ENCODE measurements at regions of chr7 and their contacts with region 1.

Region 1: GRCh38 chr7:44622307-44623151 is 16.1 kb downstream of the OGDH start:
- DNase-seq: peak; percentile 78
- ATAC-seq: peak; percentile 93
- H3K4me3 Mint-ChIP-seq: peak overlapping the region; percentile 66
- H3K27ac Mint-ChIP-seq: peak overlapping the region; percentile 99
- H3K4me1 Mint-ChIP-seq: peaks cover 91% of the 10 kb centered on the region
- H3K27me3 Mint-ChIP-seq: no peaks in the 10 kb centered on the region

Region 2: DNA sequence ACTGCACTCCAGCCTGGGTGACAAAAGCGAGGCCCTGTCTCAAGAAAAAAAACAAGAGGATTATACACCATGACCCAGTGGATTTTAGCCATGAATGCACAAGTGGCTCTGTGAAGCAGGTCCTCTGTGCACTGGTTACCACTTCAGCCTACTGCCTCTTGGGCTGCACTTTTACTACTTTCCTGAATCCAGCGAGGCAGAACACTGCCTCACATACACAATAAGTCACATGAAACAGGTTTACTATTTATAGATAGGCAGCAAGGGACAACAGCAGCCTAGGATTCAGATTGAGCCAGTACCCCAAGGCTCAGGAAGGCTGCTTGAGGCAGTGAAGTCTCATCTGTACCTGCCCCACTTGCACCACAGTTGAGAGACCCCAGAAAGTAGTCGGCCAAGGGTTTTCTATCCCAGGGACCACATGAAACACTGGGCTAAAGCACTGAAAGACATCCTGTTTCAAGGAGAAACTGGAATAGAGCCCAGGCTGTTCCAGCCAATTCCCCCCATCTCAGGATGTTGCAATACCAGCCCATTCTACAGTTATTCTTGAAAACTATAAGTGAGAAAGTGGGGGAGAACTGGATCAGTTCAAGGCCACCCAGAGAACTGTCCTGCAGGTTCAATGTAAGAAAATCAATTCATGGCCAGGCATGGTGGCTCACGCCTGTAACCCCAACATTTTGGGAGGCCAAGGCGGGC is 26.4 kb before region 1 on chr7:
- CTCF ChIA-PET with region 1: no interaction called
- DNase-seq: no peak
- ATAC-seq: no peak
- H3K4me3 Mint-ChIP-seq: no peak overlapping the region
- H3K27ac Mint-ChIP-seq: no peak overlapping the region
- H3K4me1 Mint-ChIP-seq: no peaks in the 10 kb centered on the region
- H3K27me3 Mint-ChIP-seq: peaks cover 5% of the 10 kb centered on the region

Region 3: GRCh38 chr7:44633254-44634186 is 11.0 kb after region 1 on chr7:
- CTCF ChIA-PET with region 1: interaction called, 68 read pairs
- DNase-seq: peak; percentile 68
- ATAC-seq: peak; percentile 20
- H3K4me3 Mint-ChIP-seq: no peak overlapping the region
- H3K27ac Mint-ChIP-seq: peak overlapping the region; percentile 99
- H3K4me1 Mint-ChIP-seq: peaks cover 91% of the 10 kb centered on the region
- H3K27me3 Mint-ChIP-seq: no peaks in the 10 kb centered on the region

Region 4: DNA sequence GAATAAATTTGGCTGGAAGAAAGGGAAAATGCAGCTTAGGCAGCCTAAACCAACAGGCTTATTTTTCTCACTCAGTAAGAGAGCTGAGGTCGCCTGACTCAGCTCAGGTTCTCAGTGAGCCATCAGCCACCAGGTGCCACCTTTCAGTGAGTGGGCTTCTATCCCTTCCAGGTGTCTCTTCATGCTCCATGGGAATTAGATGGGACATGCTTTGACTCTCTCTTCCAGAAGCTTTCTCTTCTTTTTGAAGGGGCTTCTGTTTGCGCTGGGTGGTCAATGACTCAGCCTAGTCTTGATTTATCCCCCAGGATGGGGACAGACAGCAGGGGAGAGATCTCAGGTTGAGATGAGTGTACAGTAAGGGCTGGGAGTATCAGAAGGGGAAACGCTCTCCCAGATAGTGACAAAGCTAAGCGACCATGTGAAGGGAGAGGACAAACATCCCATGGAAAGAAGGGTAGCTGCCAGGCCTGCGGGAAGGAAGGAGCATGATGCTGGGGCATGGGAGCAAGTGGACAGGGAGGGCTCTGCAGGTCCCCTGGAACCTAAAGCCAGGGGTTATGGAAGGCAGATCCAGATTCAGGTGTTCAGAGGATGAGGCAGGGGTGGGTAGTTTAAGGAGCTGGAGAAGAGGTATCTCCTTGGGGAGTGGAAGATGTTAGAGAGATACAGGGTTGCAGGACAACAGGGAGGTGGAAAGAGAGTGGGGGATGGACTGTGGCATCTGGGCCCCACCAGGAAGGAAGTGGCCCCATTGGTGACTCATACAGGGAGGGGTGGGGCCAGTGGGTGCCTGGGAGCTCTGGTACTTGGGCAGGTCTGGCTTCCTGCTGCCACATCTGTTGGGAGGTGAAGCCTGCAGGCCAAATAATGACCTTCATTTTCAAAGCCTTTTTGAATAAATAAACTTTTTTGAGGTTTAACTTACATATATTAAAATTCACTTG is 16.4 kb after region 1 on chr7:
- CTCF ChIA-PET with region 1: interaction called, 68 read pairs
- DNase-seq: peak; percentile 96
- ATAC-seq: peak; percentile 80
- H3K4me3 Mint-ChIP-seq: peak overlapping the region; percentile 72
- H3K27ac Mint-ChIP-seq: peak overlapping the region; percentile 99
- H3K4me1 Mint-ChIP-seq: peaks cover 80% of the 10 kb centered on the region
- H3K27me3 Mint-ChIP-seq: no peaks in the 10 kb centered on the region

Region 5: GRCh38 chr7:44673324-44673723 is 50.8 kb after region 1 on chr7:
- CTCF ChIA-PET with region 1: no interaction called
- DNase-seq: no peak
- ATAC-seq: no peak
- H3K4me3 Mint-ChIP-seq: no peak overlapping the region
- H3K27ac Mint-ChIP-seq: no peak overlapping the region
- H3K4me1 Mint-ChIP-seq: no peaks in the 10 kb centered on the region
- H3K27me3 Mint-ChIP-seq: no peaks in the 10 kb centered on the region

Measured in activated CD8-positive, alpha-beta memory T cell treated with anti-CD3 and anti-CD28 coated beads, Interleukin-2, amount 10 ng/mL, durations not matched to agents 7 days and 5 days (primary cell).